ENCODE measurements at regions of chr4 and their contacts with region 1.

Region 1: DNA sequence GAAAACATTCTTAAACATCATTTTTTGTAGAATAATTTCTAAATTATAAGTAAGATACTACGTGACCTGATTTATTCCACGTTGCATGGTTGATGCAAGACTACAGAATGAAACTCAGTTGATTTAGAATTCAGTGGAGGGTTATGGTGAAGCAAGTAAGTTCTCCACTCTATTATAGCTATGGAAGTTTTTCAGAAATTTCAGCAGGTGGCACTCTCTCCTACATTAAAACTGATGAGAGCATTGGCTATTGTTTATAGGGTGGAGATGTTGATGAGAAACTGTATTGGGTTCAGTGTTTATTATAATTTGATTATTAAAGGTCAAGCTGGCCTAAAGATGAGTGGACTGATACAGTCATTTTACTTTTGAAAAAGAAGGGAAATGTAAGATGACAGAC is 88.0 kb downstream of the FNIP2 start:
- DNase-seq: peak; percentile 15
- ATAC-seq: peak; percentile 89
- H3K4me3 ChIP-seq: no peak overlapping the region
- H3K27ac ChIP-seq: no peak overlapping the region
- H3K4me1 ChIP-seq: no peaks in the 10 kb centered on the region
- H3K27me3 ChIP-seq: no peaks in the 10 kb centered on the region
- CTCF ChIP-seq: peak; percentile 63
- EP300 ChIP-seq: no peak
- POLR2A ChIP-seq: no peak
- RAD21 ChIP-seq: peak; percentile 53; the same call in 1 of the 2 replicates

Region 2: DNA sequence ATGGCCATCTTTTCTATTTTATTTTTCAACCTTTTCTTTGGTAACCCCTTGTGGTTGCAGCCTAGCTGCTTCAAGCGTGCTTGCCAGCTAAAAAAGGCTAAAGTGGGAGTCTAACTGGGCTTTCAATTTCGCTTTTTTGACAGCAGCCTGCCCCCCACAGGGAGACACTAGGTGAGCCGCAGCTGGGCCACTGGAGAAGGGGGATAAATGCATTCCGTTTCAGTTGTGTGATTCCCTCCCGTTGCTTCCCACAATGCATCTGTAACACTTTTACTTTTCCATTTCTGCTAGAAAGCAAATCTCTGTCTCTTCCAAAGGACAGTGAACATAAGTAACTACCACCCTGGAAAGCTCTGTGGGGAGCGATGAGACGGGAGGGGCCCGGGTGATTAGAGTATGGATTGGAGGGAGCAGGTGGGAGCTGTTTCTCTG is 159.8 kb after region 1 on chr4:
- CTCF ChIA-PET with region 1: no interaction called
- POLR2A ChIA-PET with region 1: no interaction called
- in situ Hi-C with region 1: loop called (anchors 10 kb)
- intact Hi-C with region 1: loop called (anchors 10 kb)
- DNase-seq: peak; percentile 53
- ATAC-seq: peak; percentile 92
- H3K4me3 ChIP-seq: peak overlapping the region in 2 of 3 experiments; percentile 29 to 38; a peak in 3 of 6 replicates
- H3K27ac ChIP-seq: no peak overlapping the region
- H3K4me1 ChIP-seq: peaks cover 20% of the 10 kb centered on the region
- H3K27me3 ChIP-seq: no peaks in the 10 kb centered on the region
- CTCF ChIP-seq: peak; percentile 76
- EP300 ChIP-seq: no peak
- POLR2A ChIP-seq: no peak
- RAD21 ChIP-seq: peak; percentile 36; the same call in 1 of the 2 replicates

Region 3: DNA sequence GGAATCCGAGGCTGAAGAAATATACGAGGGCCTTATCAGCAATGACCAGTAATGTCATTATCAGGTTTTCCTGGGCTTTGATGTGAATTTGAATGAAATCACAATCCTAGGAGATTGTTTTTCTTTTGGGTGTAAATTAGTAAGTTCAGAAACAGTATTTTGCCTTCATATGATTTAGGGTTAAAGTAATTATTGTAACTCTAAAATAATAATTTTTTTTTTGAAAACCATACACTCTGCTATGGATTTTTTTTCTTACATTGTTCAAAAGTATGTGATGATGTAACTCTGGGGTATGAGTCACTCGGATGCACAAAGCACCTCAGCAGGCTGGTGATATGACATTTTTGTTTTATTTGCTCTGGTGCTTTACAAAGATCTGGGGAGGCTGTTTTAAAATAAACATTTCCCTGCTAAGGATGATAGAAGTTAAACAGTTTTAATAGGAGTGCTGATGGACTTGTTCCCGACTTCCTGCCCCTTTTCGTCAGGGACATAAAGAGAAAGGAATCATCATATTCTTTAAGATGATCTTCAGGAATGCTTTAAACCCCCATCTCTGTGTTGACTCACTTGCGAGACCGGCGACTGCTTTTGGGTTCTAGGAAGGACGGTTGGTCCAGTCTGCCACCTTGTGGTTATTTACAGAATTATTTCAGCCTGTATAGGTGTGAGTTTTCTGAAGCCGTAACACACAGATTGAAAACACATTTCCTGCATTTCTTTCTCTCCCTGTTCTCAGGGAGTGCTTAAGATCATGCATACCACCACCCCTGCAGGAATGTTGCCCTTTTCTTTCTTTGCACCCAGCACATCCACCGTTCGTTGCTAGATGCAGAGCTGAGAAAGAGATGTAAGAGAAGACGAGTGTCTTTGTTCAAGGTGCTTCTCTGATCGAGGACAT is 318.5 kb after region 1 on chr4:
- CTCF ChIA-PET with region 1: interaction called, 26 read pairs
- POLR2A ChIA-PET with region 1: interaction called, 3 read pairs
- in situ Hi-C with region 1: loop called (anchors 5 kb)
- intact Hi-C with region 1: loop called (anchors 1 kb)
- DNase-seq: peak; percentile 77
- ATAC-seq: peak; percentile 93
- H3K4me3 ChIP-seq: peak overlapping the region in 1 of 3 experiments; percentile 20; a peak in 1 of 6 replicates
- H3K27ac ChIP-seq: no peak overlapping the region
- H3K4me1 ChIP-seq: peaks cover 41% of the 10 kb centered on the region
- H3K27me3 ChIP-seq: no peaks in the 10 kb centered on the region
- CTCF ChIP-seq: peak; percentile 85
- EP300 ChIP-seq: no peak
- POLR2A ChIP-seq: no peak
- RAD21 ChIP-seq: peak; percentile 76

Region 4: DNA sequence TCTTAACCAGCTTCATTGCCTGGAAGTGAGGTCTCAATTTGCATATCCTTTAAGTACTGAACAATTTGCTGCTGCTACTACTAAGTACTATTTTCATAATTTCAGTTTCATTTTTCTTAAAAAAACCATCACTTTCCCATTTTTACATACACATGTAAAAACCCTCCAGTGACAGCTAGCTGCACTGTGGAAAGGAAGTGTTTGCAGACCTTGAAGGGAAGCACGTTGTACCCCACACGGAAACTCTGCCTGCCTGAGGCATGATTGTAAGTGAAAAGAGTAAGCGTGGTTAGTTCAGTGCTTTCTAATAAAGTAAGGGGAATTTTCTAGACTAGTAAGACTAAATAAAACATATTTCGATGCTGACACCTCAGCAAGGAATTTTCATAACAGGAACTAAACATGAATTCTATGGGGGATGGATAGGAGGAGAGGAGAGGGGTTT is 349.6 kb after region 1 on chr4:
- CTCF ChIA-PET with region 1: interaction called, 16 read pairs
- POLR2A ChIA-PET with region 1: no interaction called
- in situ Hi-C with region 1: loop called (anchors 5 kb)
- intact Hi-C with region 1: loop called (anchors 1 kb)
- DNase-seq: no peak
- ATAC-seq: no peak
- H3K4me3 ChIP-seq: no peak overlapping the region
- H3K27ac ChIP-seq: no peak overlapping the region
- H3K4me1 ChIP-seq: peaks cover 13% of the 10 kb centered on the region
- H3K27me3 ChIP-seq: no peaks in the 10 kb centered on the region
- CTCF ChIP-seq: no peak
- EP300 ChIP-seq: no peak
- POLR2A ChIP-seq: no peak
- RAD21 ChIP-seq: no peak

Region 5: GRCh38 chr4:159446266-159446976 is 589.6 kb after region 1 on chr4:
- CTCF ChIA-PET with region 1: no interaction called
- POLR2A ChIA-PET with region 1: no interaction called
- in situ Hi-C with region 1: loop called (anchors 25 kb)
- intact Hi-C with region 1: no loop called
- DNase-seq: peak; percentile 72
- ATAC-seq: peak; percentile 100
- H3K4me3 ChIP-seq: no peak overlapping the region
- H3K27ac ChIP-seq: no peak overlapping the region
- H3K4me1 ChIP-seq: peaks cover 6% of the 10 kb centered on the region; the same call in 1 of the 2 replicates
- H3K27me3 ChIP-seq: no peaks in the 10 kb centered on the region
- CTCF ChIP-seq: peak; percentile 93
- EP300 ChIP-seq: no peak
- POLR2A ChIP-seq: no peak
- RAD21 ChIP-seq: peak; percentile 87